ENCODE measurements at regions of chr5 and their contacts with region 1.

Region 1: GRCh38 chr5:72955768-72956323 is at the start of gene FCHO2:
- DNase-seq: peak; percentile 92 to 95 (median 93)
- H3K4me3 ChIP-seq: peak within 1 kb of the TSS; percentile 85 to 96
- H3K4me3 Mint-ChIP-seq: peak within 1 kb of the TSS; percentile 90 to 99 (median 94)
- H3K27ac ChIP-seq: peak within 1 kb of the TSS; percentile 29
- H3K27ac Mint-ChIP-seq: peak within 1 kb of the TSS; percentile 85 to 91 (median 87)
- H3K4me1 ChIP-seq: peaks cover 15% of the 10 kb centered on the region
- H3K4me1 Mint-ChIP-seq: peaks cover 13 to 19% (median 13%) of the 10 kb centered on the region in 4 donors
- H3K27me3 ChIP-seq: no peaks in the 10 kb centered on the region
- H3K27me3 Mint-ChIP-seq: peaks cover 14 to 34% of the 10 kb centered on the region in 2 donors
- total RNA-seq, gene FCHO2: 6.1 to 6.3 TPM

Region 2: DNA sequence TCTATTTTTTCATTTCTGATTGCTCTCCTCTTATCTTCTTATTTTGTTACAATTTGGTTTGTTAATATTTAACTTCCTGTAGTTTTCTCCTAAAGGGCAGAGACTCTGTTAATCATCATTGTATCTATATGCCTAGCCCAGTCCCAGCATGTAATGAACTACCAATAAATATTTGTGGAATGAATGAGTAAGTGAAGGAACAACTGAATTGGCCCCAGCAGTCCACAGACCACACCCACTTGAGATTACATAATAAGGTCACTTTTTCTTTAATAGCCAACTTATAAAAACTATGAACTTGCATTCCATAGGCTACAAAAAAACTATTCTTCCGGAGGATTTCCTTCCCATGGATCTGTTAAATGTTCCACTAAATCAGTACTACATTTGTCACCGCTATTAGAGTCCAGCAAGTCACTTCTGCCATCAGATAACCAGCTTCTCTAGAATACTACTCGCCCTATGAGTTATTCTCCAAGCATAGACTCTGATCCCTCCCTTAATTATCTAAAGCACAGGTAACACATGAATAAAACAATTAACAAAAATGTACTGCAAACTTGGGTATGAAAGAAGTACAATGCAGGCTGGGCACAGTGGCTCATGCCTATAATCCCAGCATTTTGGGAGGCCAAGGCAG is 166.9 kb before region 1 on chr5:
- CTCF ChIA-PET with region 1: no interaction called
- POLR2A ChIA-PET with region 1: no interaction called
- intact Hi-C with region 1: no loop called
- DNase-seq: no peak
- H3K4me3 ChIP-seq: no peak overlapping the region
- H3K4me3 Mint-ChIP-seq: no peak overlapping the region
- H3K27ac ChIP-seq: no peak overlapping the region
- H3K27ac Mint-ChIP-seq: no peak overlapping the region
- H3K4me1 ChIP-seq: no peaks in the 10 kb centered on the region
- H3K4me1 Mint-ChIP-seq: no peaks in the 10 kb centered on the region
- H3K27me3 ChIP-seq: no peaks in the 10 kb centered on the region
- H3K27me3 Mint-ChIP-seq: peaks cover 12 to 14% of the 10 kb centered on the region in 2 donors

Region 3: DNA sequence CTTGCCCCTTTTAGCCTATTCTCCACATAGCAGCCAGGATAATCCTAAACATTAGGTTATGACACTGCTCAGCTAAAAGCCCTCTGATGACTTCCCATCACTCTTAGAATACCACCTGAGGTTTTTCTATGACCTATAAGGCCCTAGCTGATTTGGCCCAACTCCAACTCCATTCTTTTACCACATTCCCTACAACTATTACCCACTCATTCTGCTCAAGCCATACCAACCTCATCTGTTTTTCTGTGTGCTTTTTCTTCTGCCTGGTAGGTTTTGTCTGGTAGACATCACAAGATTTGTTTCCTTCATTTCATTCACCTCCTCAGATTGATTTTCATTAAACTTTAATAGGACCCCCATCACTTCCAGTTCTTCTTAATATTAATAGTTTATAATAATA is 12.5 kb before region 1 on chr5:
- CTCF ChIA-PET with region 1: interaction called, 10 read pairs
- POLR2A ChIA-PET with region 1: no interaction called
- intact Hi-C with region 1: no loop called
- DNase-seq: no peak
- H3K4me3 ChIP-seq: no peak overlapping the region
- H3K4me3 Mint-ChIP-seq: no peak overlapping the region
- H3K27ac ChIP-seq: no peak overlapping the region
- H3K27ac Mint-ChIP-seq: peak overlapping the region in 1 of 7 donors; percentile 4
- H3K4me1 ChIP-seq: no peaks in the 10 kb centered on the region
- H3K4me1 Mint-ChIP-seq: no peaks in the 10 kb centered on the region
- H3K27me3 ChIP-seq: no peaks in the 10 kb centered on the region
- H3K27me3 Mint-ChIP-seq: peaks cover 19 to 26% of the 10 kb centered on the region in 2 donors